ENCODE measurements at regions of chr10 and their contacts with region 1.

Region 1: DNA sequence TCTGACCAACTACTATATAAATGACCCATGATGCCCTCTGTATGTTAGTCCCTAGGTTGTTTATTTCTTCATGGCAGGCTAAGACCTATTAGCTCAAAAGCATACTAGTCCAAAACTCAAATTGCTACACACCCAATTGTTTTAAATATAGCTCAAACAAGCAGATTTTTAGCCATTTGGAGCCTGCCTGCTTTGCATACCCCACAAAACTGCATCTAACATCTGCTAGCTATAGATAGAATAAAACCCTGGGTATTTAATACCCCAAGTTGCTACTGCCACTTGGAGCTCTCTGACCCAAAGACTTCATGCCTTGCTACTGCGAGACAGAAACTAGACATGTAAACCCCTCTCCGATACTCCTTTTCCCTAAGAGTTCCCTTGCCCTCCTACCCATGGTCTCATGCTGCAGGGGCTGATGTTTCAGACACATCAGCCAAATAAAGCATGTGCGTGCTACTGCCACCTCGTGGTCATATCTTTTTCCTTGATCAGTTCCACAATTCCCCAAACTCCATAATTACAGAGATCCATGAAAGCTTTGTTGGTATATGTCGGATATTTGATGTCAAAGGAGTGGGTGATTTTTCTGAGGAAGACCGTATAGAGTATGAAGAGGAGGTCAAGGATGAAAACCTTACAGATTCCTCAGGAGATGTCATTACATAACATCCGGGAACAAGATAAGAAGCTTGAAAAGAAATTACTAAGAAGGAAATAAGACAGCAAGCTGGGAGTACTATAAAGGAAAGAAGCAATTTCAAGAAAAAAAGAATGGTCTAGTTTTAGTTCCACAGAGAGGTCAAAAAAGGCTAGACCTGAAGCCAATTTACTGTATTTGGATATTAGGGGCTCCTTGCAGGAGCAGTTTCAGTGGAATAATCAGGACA is 386.6 kb downstream of the SH2D4B start:
- DNase-seq: peak in 1 of 2 donors; percentile 24
- H3K4me3 ChIP-seq: no peak overlapping the region
- H3K27ac ChIP-seq: no peak overlapping the region
- H3K4me1 ChIP-seq: no peaks in the 10 kb centered on the region
- H3K27me3 ChIP-seq: no peaks in the 10 kb centered on the region
- CTCF ChIP-seq: peak; percentile 42 to 53

Region 2: GRCh38 chr10:80662577-80663261 is 261.6 kb before region 1 on chr10:
- intact Hi-C with region 1: loop called (anchors 10 kb)
- DNase-seq: peak; percentile 80 to 87
- H3K4me3 ChIP-seq: peak overlapping the region; percentile 33 to 36
- H3K27ac ChIP-seq: peak overlapping the region; percentile 44 to 69
- H3K4me1 ChIP-seq: peaks cover 0 to 14% (median 11%) of the 10 kb centered on the region in 4 donors
- H3K27me3 ChIP-seq: peaks cover 0 to 8% of the 10 kb centered on the region in 2 donors
- CTCF ChIP-seq: peak; percentile 86

Region 3: DNA sequence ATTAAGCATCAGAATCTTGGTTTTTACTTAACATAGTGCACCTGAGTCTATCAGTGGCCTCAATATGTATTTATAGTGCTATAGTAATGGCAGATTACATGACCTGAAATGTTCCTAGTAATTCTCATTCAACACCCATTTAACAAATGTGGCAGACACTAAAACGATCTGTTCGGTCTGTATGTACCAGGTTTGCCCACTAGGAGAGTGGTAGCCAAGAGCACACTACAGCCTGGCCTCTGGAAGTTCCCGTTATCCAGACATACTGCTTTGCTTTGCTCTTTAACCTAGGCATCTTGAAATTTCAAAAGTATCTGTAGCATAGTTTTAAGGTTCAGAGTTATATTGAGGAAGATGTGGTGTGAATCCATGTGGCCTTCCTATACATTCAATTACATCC is 555.0 kb after region 1 on chr10:
- intact Hi-C with region 1: no loop called
- DNase-seq: no peak
- H3K4me3 ChIP-seq: no peak overlapping the region
- H3K27ac ChIP-seq: no peak overlapping the region
- H3K4me1 ChIP-seq: no peaks in the 10 kb centered on the region
- H3K27me3 ChIP-seq: no peaks in the 10 kb centered on the region
- CTCF ChIP-seq: no peak